ENCODE measurements at regions of chr9 and their contacts with region 1.

Region 1: GRCh38 chr9:71928832-71929604 is 17.6 kb downstream of the C9orf85 start:
- DNase-seq: peak; percentile 85
- ATAC-seq: peak; percentile 32
- H3K4me3 ChIP-seq: peak overlapping the region; percentile 31; the same call in 1 of the 2 replicates
- H3K27ac ChIP-seq: peak overlapping the region; percentile 84
- H3K4me1 ChIP-seq: peaks cover 32% of the 10 kb centered on the region
- H3K27me3 ChIP-seq: no peaks in the 10 kb centered on the region
- CTCF ChIP-seq: no peak

Region 2: DNA sequence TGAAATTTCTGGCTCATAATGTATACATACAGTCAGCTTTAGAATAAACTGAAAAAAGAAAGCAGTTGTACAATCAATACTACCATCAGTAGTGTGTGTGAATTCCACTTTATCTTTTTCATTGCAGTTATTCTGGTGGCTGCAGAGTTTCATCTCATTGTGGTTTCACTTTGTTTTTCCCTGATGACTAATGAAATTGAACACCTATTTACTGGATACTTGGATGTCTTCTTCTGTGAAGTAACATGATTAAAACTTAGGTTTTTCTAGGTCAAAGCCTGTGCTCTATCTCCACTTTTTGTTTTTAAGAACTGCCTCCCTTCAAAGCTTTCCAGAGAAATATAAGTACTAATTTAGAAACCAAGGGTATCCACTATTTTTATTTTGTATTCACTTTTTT is 981.9 kb before region 1 on chr9:
- CTCF ChIA-PET with region 1: no interaction called
- POLR2A ChIA-PET with region 1: interaction called, 23 read pairs
- intact Hi-C with region 1: no loop called
- DNase-seq: no peak
- ATAC-seq: no peak
- H3K4me3 ChIP-seq: no peak overlapping the region
- H3K27ac ChIP-seq: no peak overlapping the region
- H3K4me1 ChIP-seq: no peaks in the 10 kb centered on the region
- H3K27me3 ChIP-seq: no peaks in the 10 kb centered on the region
- CTCF ChIP-seq: no peak

Region 3: GRCh38 chr9:71944475-71945375 is 15.7 kb after region 1 on chr9:
- CTCF ChIA-PET with region 1: no interaction called
- POLR2A ChIA-PET with region 1: no interaction called
- intact Hi-C with region 1: loop called (anchors 2 kb)
- DNase-seq: peak; percentile 70
- ATAC-seq: peak; percentile 83
- H3K4me3 ChIP-seq: peak overlapping the region; percentile 41; the same call in 1 of the 2 replicates
- H3K27ac ChIP-seq: peak overlapping the region; percentile 91
- H3K4me1 ChIP-seq: peaks cover 34% of the 10 kb centered on the region
- H3K27me3 ChIP-seq: no peaks in the 10 kb centered on the region
- CTCF ChIP-seq: no peak

Region 4: DNA sequence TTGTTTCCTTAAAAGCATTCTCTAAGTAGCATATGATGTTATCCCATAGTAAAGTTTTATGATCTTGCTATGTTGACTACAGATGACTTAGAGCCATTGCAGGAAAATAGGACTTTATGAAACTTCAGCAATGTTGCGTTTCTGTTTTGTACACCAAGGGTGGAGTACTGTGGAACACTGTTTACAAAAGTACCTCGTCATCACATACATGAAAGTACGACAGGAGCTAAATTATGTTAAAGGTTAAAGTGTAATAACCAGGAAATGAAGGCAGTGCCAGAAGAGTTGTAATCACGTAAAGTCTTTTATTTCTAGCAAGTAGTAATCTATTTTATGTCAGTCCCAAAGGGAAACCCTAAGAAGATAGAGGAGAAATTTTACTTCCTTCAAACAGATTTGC is 33.3 kb after region 1 on chr9:
- CTCF ChIA-PET with region 1: no interaction called
- POLR2A ChIA-PET with region 1: no interaction called
- intact Hi-C with region 1: loop called (anchors 5 kb)
- DNase-seq: peak; percentile 39
- ATAC-seq: peak; percentile 79
- H3K4me3 ChIP-seq: no peak overlapping the region
- H3K27ac ChIP-seq: peak overlapping the region; percentile 54
- H3K4me1 ChIP-seq: no peaks in the 10 kb centered on the region; the same call in 1 of the 2 replicates
- H3K27me3 ChIP-seq: no peaks in the 10 kb centered on the region
- CTCF ChIP-seq: no peak

Region 5: GRCh38 chr9:72271613-72272478 is 342.8 kb after region 1 on chr9:
- CTCF ChIA-PET with region 1: no interaction called
- POLR2A ChIA-PET with region 1: no interaction called
- intact Hi-C with region 1: no loop called
- DNase-seq: peak; percentile 72
- ATAC-seq: peak; percentile 53; the same call in 1 of the 2 replicates
- H3K4me3 ChIP-seq: no peak overlapping the region
- H3K27ac ChIP-seq: no peak overlapping the region
- H3K4me1 ChIP-seq: no peaks in the 10 kb centered on the region
- H3K27me3 ChIP-seq: no peaks in the 10 kb centered on the region; the same call in 1 of the 2 replicates
- CTCF ChIP-seq: peak; percentile 81

Measured in PC-3 (cell line).